ENCODE measurements at regions of chr13 and their contacts with region 1.

Region 1: DNA sequence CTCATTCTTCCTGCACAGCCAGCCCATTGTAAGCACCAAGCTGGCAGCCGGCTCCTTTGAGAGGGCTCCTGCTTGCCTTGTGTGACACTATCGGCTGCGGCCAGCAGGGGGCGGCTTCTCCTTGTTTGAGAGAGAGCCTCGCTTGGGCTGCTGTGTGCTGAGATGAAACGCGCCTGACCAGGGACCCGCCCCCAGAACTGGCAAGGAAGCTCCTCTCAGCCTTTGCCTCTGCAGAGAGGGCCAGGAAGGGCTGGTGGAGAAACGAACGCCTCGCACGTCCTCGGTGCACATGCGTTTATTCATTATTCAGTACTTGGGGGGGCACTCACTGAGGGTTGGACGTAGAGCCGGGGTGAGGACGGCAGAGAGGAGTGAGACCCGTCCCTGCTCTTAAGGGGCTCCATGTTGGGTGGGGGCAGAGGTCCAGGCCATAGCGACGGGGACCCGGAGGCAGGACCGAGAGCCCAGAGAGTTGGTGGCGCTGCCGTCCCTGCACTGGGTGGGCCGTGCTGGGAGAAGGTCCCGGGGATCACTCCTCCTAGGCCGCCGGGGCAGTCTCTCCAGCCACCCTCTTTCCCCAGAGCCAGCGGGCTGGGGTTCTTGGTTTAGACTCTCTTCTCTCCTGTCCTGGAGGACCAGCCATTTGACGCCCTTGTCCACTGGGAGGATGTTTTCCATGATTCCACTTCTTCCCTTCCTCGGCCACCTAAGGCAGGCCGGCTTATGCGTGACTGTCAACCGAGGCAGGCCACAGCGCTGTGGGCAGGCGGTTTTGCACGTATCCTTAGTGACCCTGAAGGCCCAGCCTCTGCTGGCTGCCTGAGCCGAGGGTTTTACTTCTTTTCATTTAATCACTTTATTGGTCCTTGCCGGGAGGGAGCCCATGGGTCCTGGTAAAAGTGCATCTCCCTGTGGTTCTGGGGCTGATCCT is 174.5 kb downstream of the KATNAL1 start:
- DNase-seq: peak; percentile 99
- ATAC-seq: peak; percentile 100
- H3K4me3 Mint-ChIP-seq: no peak overlapping the region
- H3K27ac Mint-ChIP-seq: peak overlapping the region; percentile 16
- H3K4me1 Mint-ChIP-seq: peaks cover 12% of the 10 kb centered on the region
- H3K27me3 Mint-ChIP-seq: no peaks in the 10 kb centered on the region
- CTCF ChIP-seq: peak; percentile 80

Region 2: DNA sequence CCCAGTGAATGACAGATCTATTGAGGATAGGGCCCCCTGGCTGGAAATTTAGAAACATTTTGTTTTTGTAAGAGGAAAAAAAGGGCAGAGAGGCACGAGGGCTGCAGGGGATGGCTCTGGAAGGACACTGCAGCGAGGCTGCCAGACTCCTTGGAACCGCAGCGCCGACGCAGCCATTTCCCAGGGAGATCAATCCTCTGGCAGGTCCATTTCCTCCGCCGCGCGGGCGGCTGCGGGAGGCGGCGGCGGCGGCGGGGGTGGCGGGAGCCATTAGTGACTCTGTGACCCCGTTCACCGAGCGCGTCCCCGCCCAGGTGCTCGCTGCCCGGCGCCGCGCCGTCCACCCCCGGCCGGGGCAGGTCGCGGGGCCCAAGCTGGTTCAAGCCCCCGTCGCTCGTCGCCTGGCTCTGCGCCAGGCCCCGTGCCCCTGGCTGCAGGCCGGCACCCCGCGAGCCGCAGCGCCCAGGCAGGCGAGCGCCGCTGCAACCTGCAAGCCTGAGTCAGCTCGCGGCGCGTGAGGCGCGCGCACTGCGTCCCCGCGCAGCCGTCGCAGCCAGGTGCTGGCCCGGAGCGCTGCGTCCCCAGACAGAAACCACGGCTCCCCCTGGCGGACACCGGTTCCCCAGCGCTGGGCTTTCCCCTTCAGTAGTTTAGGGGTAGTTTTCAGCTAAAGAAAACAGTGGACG is 18.2 kb before region 1 on chr13:
- CTCF ChIA-PET with region 1: interaction called, 74 read pairs
- POLR2A ChIA-PET with region 1: interaction called, 3 read pairs
- intact Hi-C with region 1: no loop called
- DNase-seq: peak; percentile 96
- ATAC-seq: peak; percentile 91
- H3K4me3 Mint-ChIP-seq: peak overlapping the region; percentile 72
- H3K27ac Mint-ChIP-seq: no peak overlapping the region
- H3K4me1 Mint-ChIP-seq: peaks cover 23% of the 10 kb centered on the region
- H3K27me3 Mint-ChIP-seq: no peaks in the 10 kb centered on the region
- CTCF ChIP-seq: peak; percentile 97

Region 3: DNA sequence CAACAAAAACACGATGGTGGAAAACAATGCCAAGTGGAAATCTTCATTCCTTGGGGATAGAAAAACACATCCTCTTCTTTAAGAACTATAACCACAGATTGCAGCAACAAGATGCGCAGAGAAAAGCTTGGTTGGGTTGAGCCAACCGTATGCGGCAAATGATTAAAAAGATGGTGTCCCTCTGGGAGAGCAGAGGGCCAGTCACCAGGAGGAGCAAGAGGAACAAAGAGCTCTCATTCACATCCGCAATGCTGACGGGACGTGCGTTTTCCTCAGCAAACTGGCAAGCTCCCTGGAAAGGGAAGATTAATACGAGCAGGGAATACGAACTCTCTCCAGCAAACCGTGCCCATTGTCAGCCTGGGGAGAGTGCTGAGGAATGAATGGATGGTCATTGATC is 32.9 kb after region 1 on chr13:
- CTCF ChIA-PET with region 1: interaction called, 32 read pairs
- POLR2A ChIA-PET with region 1: interaction called, 4 read pairs
- intact Hi-C with region 1: loop called (anchors 2 kb)
- DNase-seq: no peak
- ATAC-seq: no peak
- H3K4me3 Mint-ChIP-seq: no peak overlapping the region
- H3K27ac Mint-ChIP-seq: no peak overlapping the region
- H3K4me1 Mint-ChIP-seq: peaks cover 11% of the 10 kb centered on the region
- H3K27me3 Mint-ChIP-seq: no peaks in the 10 kb centered on the region
- CTCF ChIP-seq: no peak

Region 4: DNA sequence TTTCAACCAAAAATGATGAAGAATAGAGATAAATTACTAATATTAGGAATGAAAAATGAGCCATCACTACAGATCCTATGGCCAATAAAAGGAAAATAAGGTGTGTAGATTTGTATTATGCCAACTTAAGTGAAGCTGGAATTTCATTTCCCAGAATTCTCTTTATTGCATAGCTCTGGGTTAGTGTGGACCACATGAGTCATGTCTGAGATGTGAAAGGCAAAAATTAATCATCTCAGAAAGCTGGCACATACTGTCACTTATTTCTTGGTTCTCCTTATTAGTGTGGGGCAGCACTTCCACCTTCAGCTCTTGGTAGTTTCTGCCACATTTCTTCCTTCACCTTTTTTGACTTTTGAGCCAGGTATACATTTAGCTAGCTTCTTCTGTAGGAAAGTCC is 91.8 kb after region 1 on chr13:
- CTCF ChIA-PET with region 1: interaction called, 13 read pairs
- POLR2A ChIA-PET with region 1: no interaction called
- intact Hi-C with region 1: no loop called
- DNase-seq: peak; percentile 11
- ATAC-seq: peak; percentile 86
- H3K4me3 Mint-ChIP-seq: no peak overlapping the region
- H3K27ac Mint-ChIP-seq: peak overlapping the region; percentile 40
- H3K4me1 Mint-ChIP-seq: peaks cover 16% of the 10 kb centered on the region
- H3K27me3 Mint-ChIP-seq: no peaks in the 10 kb centered on the region
- CTCF ChIP-seq: no peak

Region 5: GRCh38 chr13:30325668-30326067 is 192.8 kb after region 1 on chr13:
- CTCF ChIA-PET with region 1: interaction called, 14 read pairs
- POLR2A ChIA-PET with region 1: no interaction called
- intact Hi-C with region 1: no loop called
- DNase-seq: no peak
- ATAC-seq: no peak
- H3K4me3 Mint-ChIP-seq: no peak overlapping the region
- H3K27ac Mint-ChIP-seq: no peak overlapping the region
- H3K4me1 Mint-ChIP-seq: no peaks in the 10 kb centered on the region
- H3K27me3 Mint-ChIP-seq: no peaks in the 10 kb centered on the region
- CTCF ChIP-seq: no peak

Region 6: DNA sequence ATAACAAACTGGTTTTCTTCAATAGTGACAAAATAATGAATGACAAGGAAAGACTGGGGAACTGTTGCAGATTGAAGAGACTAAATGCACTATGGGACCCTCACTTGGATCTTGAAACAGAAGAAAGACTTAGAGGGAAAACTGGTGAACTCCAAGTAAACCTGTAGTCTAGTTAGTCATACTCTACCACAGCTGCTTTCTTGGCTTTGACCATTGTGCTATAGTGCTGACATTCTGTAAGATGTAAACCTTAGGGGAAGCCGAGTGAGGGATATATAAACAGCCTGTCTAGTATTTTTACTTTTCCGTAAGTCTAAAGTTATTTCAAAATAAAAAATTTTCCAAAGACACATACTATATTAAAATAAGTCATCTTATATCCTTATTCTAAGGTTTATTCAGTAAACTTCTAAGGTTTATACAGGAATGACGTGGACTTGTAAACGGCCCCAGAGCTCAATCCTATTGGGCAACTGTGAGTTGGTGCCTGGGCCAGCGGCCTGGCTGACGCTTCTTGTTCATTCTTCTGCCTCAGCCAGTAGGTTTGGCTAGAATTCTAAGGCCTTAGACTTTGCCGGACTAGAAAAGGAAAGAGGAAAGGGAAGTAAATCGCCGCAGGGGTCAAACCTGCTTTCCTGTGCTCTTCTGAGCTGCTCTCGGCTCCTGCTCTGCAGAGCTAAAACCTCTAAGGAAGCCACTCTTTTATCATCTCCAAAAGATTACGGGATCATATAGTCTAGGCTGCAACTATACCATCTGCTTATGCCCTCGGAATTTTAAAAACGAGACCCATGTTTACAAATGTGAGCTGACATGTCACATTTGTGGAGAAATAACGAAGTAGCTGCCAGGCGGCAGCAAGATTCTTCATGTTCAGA is 255.8 kb after region 1 on chr13:
- CTCF ChIA-PET with region 1: interaction called, 12 read pairs
- POLR2A ChIA-PET with region 1: no interaction called
- intact Hi-C with region 1: no loop called
- DNase-seq: no peak
- ATAC-seq: peak; percentile 15
- H3K4me3 Mint-ChIP-seq: peak overlapping the region; percentile 49
- H3K27ac Mint-ChIP-seq: peak overlapping the region; percentile 77
- H3K4me1 Mint-ChIP-seq: peaks cover 29% of the 10 kb centered on the region
- H3K27me3 Mint-ChIP-seq: no peaks in the 10 kb centered on the region
- CTCF ChIP-seq: no peak